GM12878 (cell line): ENCODE measurements at regions of chr4 and their contacts with region 1.

Region 1: DNA sequence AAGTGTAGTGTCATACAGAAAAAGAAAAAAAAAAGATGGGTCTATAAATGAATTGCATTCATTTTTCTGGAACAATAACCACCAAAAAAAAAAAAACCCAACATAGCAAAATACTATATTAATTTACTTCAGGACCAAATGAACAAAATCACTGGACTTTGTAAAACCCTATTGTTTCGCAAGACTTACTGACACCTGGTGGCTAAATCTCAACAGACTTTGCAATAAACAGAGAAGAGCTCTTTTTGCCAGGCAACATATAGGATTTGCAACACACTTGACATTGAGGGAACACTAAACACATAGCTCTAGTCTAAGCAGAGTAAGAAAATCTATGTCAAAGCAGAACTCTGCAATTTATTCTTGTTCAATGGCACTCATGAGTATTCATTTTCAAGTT is 990.2 kb downstream of the STPG2 start:
- DNase-seq: no peak
- ATAC-seq: no peak
- H3K4me3 ChIP-seq: no peak overlapping the region
- H3K27ac ChIP-seq: no peak overlapping the region
- H3K4me1 ChIP-seq: no peaks in the 10 kb centered on the region
- H3K27me3 ChIP-seq: no peaks in the 10 kb centered on the region
- CTCF ChIP-seq: peak; percentile 8 to 26 (median 11); a peak in 1 of 6 replicates
- EP300 ChIP-seq: no peak
- POLR2A ChIP-seq: no peak
- RAD21 ChIP-seq: peak; percentile 35; the same call in 1 of the 2 replicates

Region 2: GRCh38 chr4:95155759-95156451 is 1997.1 kb before region 1 on chr4:
- CTCF ChIA-PET with region 1: no interaction called
- POLR2A ChIA-PET with region 1: no interaction called
- RAD21 ChIA-PET with region 1: no interaction called
- SMC1A ChIA-PET with region 1: no interaction called
- in situ Hi-C with region 1: no loop called
- intact Hi-C with region 1: loop called (anchors 10 kb)
- DNase-seq: no peak
- ATAC-seq: peak; percentile 58
- H3K4me3 ChIP-seq: no peak overlapping the region
- H3K27ac ChIP-seq: no peak overlapping the region
- H3K4me1 ChIP-seq: no peaks in the 10 kb centered on the region
- H3K27me3 ChIP-seq: no peaks in the 10 kb centered on the region; a peak in 2 of 4 replicates
- CTCF ChIP-seq: peak; percentile 51 to 58 (median 52)
- EP300 ChIP-seq: no peak
- POLR2A ChIP-seq: no peak
- RAD21 ChIP-seq: peak; percentile 57

Region 3: DNA sequence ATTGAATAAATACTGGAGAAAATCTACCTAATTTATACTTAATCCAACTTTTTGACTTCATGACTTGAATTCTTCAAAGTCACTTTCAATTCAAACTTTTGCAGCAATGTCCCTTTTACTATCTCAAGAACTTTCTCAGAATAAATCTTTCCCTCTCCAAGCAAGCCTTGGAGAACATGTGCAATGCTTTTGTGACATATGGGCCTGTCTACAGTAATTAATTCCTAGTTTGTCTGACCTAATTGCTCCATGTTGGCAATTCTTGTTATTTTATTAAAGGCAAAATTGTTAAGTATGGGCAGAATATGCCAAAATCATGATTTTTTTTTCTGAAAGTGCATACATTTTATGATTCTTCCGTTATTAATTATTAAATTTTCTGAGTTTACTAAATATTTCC is 197.8 kb before region 1 on chr4:
- CTCF ChIA-PET with region 1: no interaction called
- POLR2A ChIA-PET with region 1: no interaction called
- RAD21 ChIA-PET with region 1: no interaction called
- SMC1A ChIA-PET with region 1: no interaction called
- in situ Hi-C with region 1: no loop called
- intact Hi-C with region 1: no loop called
- DNase-seq: no peak
- ATAC-seq: no peak
- H3K4me3 ChIP-seq: no peak overlapping the region
- H3K27ac ChIP-seq: no peak overlapping the region
- H3K4me1 ChIP-seq: no peaks in the 10 kb centered on the region
- H3K27me3 ChIP-seq: no peaks in the 10 kb centered on the region
- CTCF ChIP-seq: no peak
- EP300 ChIP-seq: no peak
- POLR2A ChIP-seq: no peak
- RAD21 ChIP-seq: no peak